H1 (cell line): ENCODE measurements at regions of chr12 and their contacts with region 1.

Region 1: DNA sequence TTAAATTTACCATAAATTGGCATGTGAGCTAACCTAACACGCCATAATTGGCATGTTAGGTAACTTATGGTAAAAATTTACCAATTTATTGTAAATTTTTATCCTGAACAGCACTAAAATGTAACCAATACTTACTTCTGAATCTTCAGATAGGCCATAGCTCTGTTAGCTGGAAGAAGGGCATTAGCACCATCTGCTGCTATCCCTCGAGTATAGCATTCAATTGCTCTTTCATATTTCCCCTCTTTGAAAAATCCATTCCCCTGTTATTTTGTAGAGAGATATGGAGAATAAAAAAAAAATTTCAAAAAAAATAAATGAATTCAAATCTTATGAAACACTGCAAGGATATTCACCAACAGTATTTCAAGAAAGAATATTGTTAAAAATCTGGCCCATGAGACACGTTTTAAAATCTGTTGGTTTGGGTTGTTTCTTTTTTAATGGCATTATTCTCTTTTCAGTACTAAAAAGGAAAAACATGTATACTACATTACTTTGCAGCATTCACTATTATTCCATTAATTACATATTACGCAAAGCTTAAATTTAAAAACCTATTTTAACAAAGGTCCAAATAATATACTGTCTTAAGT is 19.1 kb downstream of the RPAP3 start:
- DNase-seq: no peak
- H3K4me3 ChIP-seq: no peak overlapping the region
- H3K27ac ChIP-seq: no peak overlapping the region
- H3K4me1 ChIP-seq: no peaks in the 10 kb centered on the region
- H3K27me3 ChIP-seq: no peaks in the 10 kb centered on the region
- CTCF ChIP-seq: peak in 2 of 3 experiments; percentile 49 to 54; a peak in 3 of 4 replicates
- EP300 ChIP-seq: no peak
- POLR2A ChIP-seq: no peak
- RAD21 ChIP-seq: peak; percentile 77 to 83

Region 2: DNA sequence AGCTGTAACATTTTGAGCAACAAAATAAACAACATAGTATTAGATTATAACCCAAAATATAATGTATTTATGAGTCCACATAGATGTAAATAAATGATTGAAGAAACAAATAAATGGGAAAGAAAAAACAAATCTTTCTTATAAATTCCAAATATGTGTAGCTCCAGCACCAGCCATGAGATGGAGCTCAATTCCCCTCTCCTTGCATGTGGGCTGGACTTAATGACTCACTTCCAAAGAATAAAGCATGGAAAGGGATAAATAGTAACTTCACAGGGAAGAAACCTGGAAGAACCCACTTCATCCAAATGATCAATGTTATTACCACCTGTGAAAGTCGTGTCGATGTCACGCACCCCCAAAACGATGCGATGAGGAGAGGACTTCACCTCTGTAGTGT is 139.7 kb before region 1 on chr12:
- CTCF ChIA-PET with region 1: interaction called, 21 read pairs
- POLR2A ChIA-PET with region 1: no interaction called
- DNase-seq: no peak
- H3K4me3 ChIP-seq: no peak overlapping the region
- H3K27ac ChIP-seq: no peak overlapping the region
- H3K4me1 ChIP-seq: no peaks in the 10 kb centered on the region
- H3K27me3 ChIP-seq: no peaks in the 10 kb centered on the region
- CTCF ChIP-seq: peak in 2 of 3 experiments; percentile 38 to 44; a peak in 3 of 4 replicates
- EP300 ChIP-seq: no peak
- POLR2A ChIP-seq: no peak
- RAD21 ChIP-seq: peak; percentile 63 to 67

Region 3: DNA sequence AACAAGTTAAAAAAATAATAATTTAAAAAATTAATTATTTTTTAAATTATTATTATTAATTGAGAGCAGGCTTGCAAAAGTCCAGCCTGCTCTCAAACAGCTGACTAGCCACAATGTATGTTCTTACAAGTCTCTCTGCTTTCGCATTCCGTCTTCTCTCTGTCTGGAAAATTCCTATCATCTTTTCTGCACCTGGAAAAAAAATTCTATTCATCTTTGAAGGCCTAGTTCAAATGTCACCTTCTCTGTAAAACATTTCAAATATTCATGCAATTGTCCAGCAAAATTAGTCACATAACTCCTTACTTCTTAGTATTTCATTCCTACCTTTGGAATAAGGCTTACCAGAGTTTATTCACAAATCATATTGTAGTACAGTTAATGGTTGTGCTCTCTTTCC is 56.4 kb before region 1 on chr12:
- CTCF ChIA-PET with region 1: no interaction called
- POLR2A ChIA-PET with region 1: no interaction called
- DNase-seq: no peak
- H3K4me3 ChIP-seq: no peak overlapping the region
- H3K27ac ChIP-seq: no peak overlapping the region
- H3K4me1 ChIP-seq: no peaks in the 10 kb centered on the region
- H3K27me3 ChIP-seq: no peaks in the 10 kb centered on the region
- CTCF ChIP-seq: no peak
- EP300 ChIP-seq: no peak
- POLR2A ChIP-seq: no peak
- RAD21 ChIP-seq: no peak

Region 4: GRCh38 chr12:47672068-47672467 is 14.7 kb before region 1 on chr12:
- CTCF ChIA-PET with region 1: interaction called, 12 read pairs
- POLR2A ChIA-PET with region 1: no interaction called
- DNase-seq: no peak
- H3K4me3 ChIP-seq: no peak overlapping the region
- H3K27ac ChIP-seq: no peak overlapping the region
- H3K4me1 ChIP-seq: no peaks in the 10 kb centered on the region
- H3K27me3 ChIP-seq: no peaks in the 10 kb centered on the region
- CTCF ChIP-seq: no peak
- EP300 ChIP-seq: no peak
- POLR2A ChIP-seq: no peak
- RAD21 ChIP-seq: no peak

Region 5: GRCh38 chr12:47819896-47820630 is 133.3 kb after region 1 on chr12 and contains the start of gene HDAC7:
- CTCF ChIA-PET with region 1: no interaction called
- POLR2A ChIA-PET with region 1: no interaction called
- DNase-seq: no peak
- H3K4me3 ChIP-seq: peak within 1 kb of the TSS; percentile 65 to 79 (median 66)
- H3K27ac ChIP-seq: peak within 1 kb of the TSS; percentile 93
- H3K4me1 ChIP-seq: peaks cover 5 to 41% (median 35%) of the 10 kb centered on the region in 4 experiments
- H3K27me3 ChIP-seq: no peaks in the 10 kb centered on the region; a peak in 2 of 7 replicates
- CTCF ChIP-seq: no peak
- EP300 ChIP-seq: no peak
- POLR2A ChIP-seq: peak in 1 of 2 experiments; percentile 68; a peak in 2 of 3 replicates
- RAD21 ChIP-seq: no peak
- total RNA-seq, gene HDAC7: 82.0 and 84.9 TPM in 2 replicates